OCI-LY7 (cell line): ENCODE measurements at regions of chr17 and their contacts with region 1.

Region 1: DNA sequence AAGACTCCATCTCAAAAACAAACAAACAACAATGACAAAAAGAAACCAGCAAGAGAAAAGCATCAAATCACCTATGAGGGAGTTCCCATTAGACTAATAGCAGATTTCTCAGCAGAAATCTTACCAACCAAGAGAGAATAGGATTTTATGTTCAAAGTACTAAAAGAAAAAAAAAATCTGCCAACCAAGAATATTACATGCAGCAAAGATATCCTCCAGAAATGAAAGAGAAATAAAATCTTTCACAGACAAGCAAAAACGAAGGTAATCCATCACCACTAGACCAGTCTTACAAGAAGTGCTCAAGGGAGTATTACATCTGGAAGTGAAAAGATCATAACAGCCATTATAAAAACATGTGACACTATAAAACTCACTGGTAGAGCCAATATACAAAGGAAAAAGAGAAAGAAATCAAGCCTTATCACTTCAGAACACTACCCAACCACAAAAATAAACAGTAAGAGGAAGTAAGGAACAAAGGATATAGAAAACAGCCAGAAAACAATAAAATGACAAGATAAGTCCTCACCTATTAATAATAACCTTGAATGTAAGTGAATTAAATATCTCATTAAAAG is 66.3 kb downstream of the STX8 start:
- DNase-seq: no peak
- H3K4me3 ChIP-seq: no peak overlapping the region
- H3K27ac ChIP-seq: no peak overlapping the region
- H3K4me1 ChIP-seq: no peaks in the 10 kb centered on the region
- CTCF ChIP-seq: no peak

Region 2: DNA sequence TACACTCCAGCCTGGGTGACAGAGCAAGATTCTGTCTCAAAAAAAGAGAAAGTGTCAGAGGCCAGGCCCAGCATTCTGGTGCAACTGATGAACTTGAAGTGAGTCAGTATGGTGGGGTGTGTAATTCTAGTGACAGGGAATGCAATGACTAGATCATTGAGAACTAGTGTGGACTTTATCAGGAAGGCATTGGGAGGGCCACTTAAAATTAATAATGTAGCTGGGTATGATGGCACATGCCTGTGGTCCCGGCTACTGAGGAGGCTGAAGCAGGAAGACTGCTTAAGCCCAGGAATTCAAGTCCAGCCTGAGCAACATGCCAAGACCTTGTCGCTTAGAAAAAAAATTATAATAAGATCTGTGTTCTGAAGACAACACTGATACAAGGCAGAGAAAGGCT is 24.5 kb before region 1 on chr17:
- CTCF ChIA-PET with region 1: no interaction called
- POLR2A ChIA-PET with region 1: no interaction called
- intact Hi-C with region 1: loop called (anchors 2 kb)
- DNase-seq: no peak
- H3K4me3 ChIP-seq: no peak overlapping the region
- H3K27ac ChIP-seq: no peak overlapping the region
- H3K4me1 ChIP-seq: no peaks in the 10 kb centered on the region
- CTCF ChIP-seq: no peak

Region 3: DNA sequence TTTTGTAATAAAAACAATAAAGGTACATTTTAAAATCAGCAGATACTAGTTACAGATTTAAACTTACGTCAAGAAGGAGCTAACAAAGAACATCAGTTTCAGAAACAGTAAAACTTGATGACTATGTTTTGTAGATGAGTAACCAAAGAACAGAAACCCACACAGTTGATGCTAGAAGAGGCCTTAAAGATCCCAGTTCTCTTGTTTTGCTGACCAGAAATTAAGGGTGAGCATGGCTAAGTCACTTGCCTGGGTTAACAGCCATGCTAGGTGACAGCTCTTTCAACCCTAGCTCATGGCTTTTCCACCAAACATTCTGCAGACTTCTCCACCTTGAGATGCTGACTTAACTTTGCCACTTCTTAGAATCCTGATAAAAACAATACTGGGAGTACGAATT is 39.9 kb after region 1 on chr17:
- CTCF ChIA-PET with region 1: no interaction called
- POLR2A ChIA-PET with region 1: no interaction called
- intact Hi-C with region 1: no loop called
- DNase-seq: no peak
- H3K4me3 ChIP-seq: no peak overlapping the region
- H3K27ac ChIP-seq: no peak overlapping the region
- H3K4me1 ChIP-seq: no peaks in the 10 kb centered on the region
- CTCF ChIP-seq: no peak